CD8-positive, alpha-beta T cell (primary cell): ENCODE measurements at regions of chr1 and their contacts with region 1.

Region 1: DNA sequence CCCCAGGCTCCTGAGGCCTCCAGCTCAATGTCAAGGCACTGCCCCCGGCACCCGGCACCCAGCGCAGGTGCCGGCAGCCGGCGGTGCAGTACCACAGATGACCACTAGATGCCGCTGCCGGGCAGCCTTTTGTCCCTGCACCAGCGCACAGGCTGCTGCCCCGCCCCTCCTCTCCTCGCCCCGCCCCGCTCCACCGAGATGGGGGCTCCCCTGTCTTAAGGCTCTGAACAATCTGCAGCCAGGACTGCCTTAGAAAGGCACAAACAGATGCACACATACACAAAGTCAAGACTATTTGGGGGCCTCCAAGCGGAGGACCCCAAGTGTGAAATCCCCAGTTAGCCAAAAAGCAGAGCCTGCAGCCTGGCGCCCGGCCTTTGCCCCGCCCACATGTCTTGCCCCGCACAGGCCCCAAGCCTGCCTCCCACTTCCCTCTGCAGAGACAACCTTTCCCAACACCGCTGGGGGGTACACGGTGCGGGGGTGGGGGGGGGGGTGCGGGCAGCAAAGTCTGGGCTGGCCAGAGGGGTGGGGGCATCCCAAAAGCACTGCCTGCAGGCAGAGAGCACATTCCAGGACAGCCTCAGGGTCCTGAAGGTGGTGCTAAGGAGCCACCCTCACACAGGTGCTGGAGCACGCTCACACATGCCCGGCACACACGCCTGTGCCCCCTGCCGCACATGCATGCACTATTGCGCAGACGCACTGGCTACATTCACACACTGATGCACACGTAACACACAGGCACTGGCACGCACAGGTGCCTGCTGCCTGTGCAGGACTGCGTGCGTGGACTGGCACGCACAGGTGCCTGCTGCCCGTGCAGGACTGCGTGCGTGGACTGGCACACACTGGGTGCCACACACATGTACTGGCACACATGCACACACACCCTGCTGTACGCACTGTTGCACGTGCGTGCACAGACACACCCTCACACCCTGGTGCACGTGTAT is 37.1 kb downstream of the ARHGEF16 start:
- DNase-seq: peak; percentile 80 to 92 (median 86)
- ATAC-seq: peak; percentile 100
- H3K4me3 ChIP-seq: no peak overlapping the region
- H3K4me3 Mint-ChIP-seq: peak overlapping the region; percentile 45
- H3K27ac ChIP-seq: no peak overlapping the region
- H3K27ac Mint-ChIP-seq: no peak overlapping the region
- H3K4me1 ChIP-seq: no peaks in the 10 kb centered on the region
- H3K4me1 Mint-ChIP-seq: peaks cover 5% of the 10 kb centered on the region
- H3K27me3 ChIP-seq: no peaks in the 10 kb centered on the region
- H3K27me3 Mint-ChIP-seq: no peaks in the 10 kb centered on the region
- CTCF ChIP-seq: peak; percentile 99

Region 2: GRCh38 chr1:3403388-3404231 is 88.0 kb before region 1 on chr1:
- CTCF ChIA-PET with region 1: no interaction called
- POLR2A ChIA-PET with region 1: no interaction called
- intact Hi-C with region 1: no loop called
- DNase-seq: no peak
- ATAC-seq: no peak
- H3K4me3 ChIP-seq: no peak overlapping the region
- H3K4me3 Mint-ChIP-seq: no peak overlapping the region
- H3K27ac ChIP-seq: no peak overlapping the region
- H3K27ac Mint-ChIP-seq: no peak overlapping the region
- H3K4me1 ChIP-seq: no peaks in the 10 kb centered on the region
- H3K4me1 Mint-ChIP-seq: no peaks in the 10 kb centered on the region
- H3K27me3 ChIP-seq: no peaks in the 10 kb centered on the region
- H3K27me3 Mint-ChIP-seq: no peaks in the 10 kb centered on the region
- CTCF ChIP-seq: no peak

Region 3: DNA sequence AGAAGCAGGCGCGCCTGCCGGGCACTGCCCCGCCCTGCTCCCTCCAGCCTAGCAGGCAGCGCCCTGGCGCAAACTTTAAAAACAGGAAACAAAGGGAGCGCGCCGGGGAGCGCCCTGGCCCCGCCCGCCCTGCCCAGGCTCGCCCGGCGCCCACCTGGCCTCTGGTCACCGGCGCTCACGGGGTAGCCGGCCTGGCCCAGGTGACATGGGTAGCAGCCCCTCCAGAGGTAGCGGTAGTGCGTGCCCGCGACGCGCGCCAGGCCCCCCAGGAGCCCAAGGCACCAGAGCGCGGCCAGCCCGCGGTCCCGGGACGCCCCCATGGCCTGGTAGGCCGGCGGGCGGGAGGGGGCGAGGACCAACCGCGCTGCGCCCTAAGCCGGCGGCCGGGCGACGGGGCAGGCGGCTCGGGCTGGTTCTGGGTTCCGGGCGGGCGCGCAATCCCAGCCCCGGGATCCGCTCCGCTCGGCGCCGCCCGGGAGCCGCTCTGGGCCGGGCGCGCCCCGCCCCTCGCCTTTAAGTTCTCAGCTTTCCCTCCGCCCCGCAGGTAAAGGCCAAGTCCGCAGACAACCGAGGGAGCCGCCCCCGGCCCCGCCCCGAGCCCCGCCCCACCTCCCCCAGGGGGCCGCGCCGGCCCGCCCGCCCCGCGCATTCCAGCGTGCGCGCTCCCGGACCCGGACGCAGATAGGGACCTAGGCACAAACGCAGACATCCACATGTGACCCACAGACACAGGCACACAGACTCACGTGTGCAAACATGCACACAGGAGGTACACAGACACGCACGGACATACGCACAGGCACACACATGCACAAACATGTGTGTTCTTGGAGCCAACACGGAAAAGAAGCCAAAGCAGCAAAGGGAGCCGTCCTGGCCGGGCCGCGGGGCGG is 39.6 kb after region 1 on chr1:
- CTCF ChIA-PET with region 1: interaction called, 7 read pairs
- POLR2A ChIA-PET with region 1: no interaction called
- intact Hi-C with region 1: loop called in 1 of 2 experiments (anchors 1 kb)
- DNase-seq: peak; percentile 60 to 93 (median 79)
- ATAC-seq: peak; percentile 84
- H3K4me3 ChIP-seq: peak overlapping the region; percentile 62 to 82
- H3K4me3 Mint-ChIP-seq: peak overlapping the region; percentile 84
- H3K27ac ChIP-seq: peak overlapping the region in 1 of 2 experiments; percentile 61
- H3K27ac Mint-ChIP-seq: peak overlapping the region; percentile 87
- H3K4me1 ChIP-seq: peaks cover 10% of the 10 kb centered on the region
- H3K4me1 Mint-ChIP-seq: peaks cover 15% of the 10 kb centered on the region
- H3K27me3 ChIP-seq: no peaks in the 10 kb centered on the region
- H3K27me3 Mint-ChIP-seq: no peaks in the 10 kb centered on the region
- CTCF ChIP-seq: no peak